HCT116 (cell line): ENCODE measurements at regions of chr14 and their contacts with region 1.

Region 1: DNA sequence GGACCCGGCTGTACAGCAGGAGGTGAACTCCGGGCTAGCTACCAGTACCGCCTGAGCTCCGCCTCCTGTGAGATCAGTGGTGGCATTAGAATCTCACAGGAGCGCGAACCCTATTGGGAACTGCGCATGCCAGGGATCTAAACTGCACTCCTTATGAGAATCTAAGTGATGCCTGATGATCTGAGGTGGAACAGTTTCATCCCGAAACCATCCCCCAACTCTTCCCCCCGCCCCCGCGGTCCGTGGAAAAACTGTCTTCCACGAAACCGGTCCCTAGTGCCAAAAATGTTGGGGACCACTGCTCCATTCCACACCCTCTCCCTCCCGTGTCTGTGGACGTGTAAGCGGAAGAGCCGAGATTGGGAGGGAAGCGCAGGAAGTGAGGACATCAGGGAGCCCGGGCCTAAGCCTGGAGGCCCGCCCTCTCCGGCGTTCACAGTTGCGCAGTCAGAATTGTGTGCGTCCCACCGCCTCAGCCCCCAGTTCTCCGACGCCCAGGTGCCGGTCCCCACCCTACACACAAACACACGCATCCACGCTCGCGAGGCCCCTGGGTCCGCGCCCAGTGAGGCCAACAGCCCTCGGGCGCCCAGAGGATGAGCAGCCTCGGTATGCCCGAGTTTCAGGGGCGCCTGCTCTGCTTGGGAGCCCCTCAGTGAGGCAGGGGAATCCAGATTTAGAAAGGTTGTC is 1.8 kb upstream of the RNASE4 start:
- DNase-seq: peak; percentile 88
- ATAC-seq: peak; percentile 61
- H3K4me3 ChIP-seq: peak overlapping the region; percentile 65 to 72
- H3K27ac ChIP-seq: peak overlapping the region; percentile 97
- H3K4me1 ChIP-seq: peaks cover 27 to 64% of the 10 kb centered on the region in 2 experiments
- H3K27me3 ChIP-seq: no peaks in the 10 kb centered on the region
- CTCF ChIP-seq: 0 out of 6 replicates have a peak, but pooled peaks of 1 of the 3 experiments have one; percentile 7
- POLR2A ChIP-seq: peak; percentile 13
- RAD21 ChIP-seq: no peak

Region 2: GRCh38 chr14:20632682-20633428 is 49.7 kb before region 1 on chr14:
- CTCF ChIA-PET with region 1: interaction called, 4 read pairs
- POLR2A ChIA-PET with region 1: interaction called, 4 read pairs
- RAD21 ChIA-PET with region 1: no interaction called
- intact Hi-C with region 1: loop called (anchors 1 kb)
- DNase-seq: no peak
- ATAC-seq: peak; percentile 76
- H3K4me3 ChIP-seq: peak overlapping the region; percentile 30 to 42
- H3K27ac ChIP-seq: peak overlapping the region; percentile 30; the same call in 1 of the 2 replicates
- H3K4me1 ChIP-seq: peaks cover 0 to 28% of the 10 kb centered on the region in 2 experiments; a peak in 3 of 4 replicates
- H3K27me3 ChIP-seq: no peaks in the 10 kb centered on the region; the same call in 1 of the 2 replicates
- CTCF ChIP-seq: no peak
- POLR2A ChIP-seq: no peak
- RAD21 ChIP-seq: no peak

Region 3: GRCh38 chr14:20723488-20723887 is 40.9 kb after region 1 on chr14:
- CTCF ChIA-PET with region 1: no interaction called
- POLR2A ChIA-PET with region 1: no interaction called
- RAD21 ChIA-PET with region 1: no interaction called
- intact Hi-C with region 1: no loop called
- DNase-seq: no peak
- ATAC-seq: no peak
- H3K4me3 ChIP-seq: no peak overlapping the region
- H3K27ac ChIP-seq: no peak overlapping the region
- H3K4me1 ChIP-seq: no peaks in the 10 kb centered on the region
- H3K27me3 ChIP-seq: peaks cover 23% of the 10 kb centered on the region
- CTCF ChIP-seq: no peak
- POLR2A ChIP-seq: no peak
- RAD21 ChIP-seq: no peak

Region 4: DNA sequence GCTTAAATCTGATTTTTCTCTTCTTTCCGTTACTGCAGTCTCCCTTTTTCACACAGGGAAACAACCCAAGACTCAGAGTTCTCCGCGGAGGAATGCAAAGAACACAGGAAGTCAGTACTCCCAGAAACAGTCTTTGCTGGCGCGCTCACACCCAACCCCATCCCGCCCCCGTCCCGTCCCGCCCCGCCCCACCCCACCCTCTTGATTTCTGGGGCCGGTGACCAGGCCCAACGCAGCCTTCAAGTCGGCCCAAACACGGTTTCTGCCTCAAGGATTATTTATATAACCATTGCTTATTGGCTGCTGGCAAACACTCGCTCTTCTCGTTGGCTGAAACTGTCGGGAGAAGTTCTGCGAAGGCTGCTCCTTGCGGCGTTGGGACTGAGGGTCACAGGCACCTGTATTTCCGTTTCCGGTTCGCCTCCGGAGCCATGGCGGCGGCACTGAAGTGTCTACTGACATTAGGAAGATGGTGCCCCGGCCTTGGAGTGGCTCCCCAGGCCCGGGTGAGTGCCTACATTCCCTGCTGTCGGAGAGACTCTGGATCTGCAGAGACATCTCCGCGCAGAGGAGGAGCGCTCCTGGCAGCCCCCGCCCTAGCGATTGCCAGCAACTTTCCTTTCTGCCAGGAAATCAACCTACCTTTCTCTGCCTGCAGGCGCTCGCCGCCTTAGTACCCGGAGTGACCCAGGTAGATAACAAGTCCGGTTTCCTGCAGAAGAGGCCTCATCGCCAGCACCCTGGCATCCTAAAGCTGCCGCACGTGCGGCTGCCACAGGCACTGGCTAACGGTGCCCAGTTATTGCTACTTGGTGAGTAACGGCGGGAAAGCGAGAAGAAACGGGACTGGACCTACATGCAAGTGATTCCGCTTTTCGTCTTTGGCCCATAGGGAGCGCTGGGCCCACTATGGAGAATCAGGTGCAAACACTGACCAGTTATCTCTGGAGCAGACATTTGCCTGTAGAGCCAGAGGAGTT is 307.3 kb after region 1 on chr14 and contains the start of gene METTL17:
- CTCF ChIA-PET with region 1: no interaction called
- POLR2A ChIA-PET with region 1: no interaction called
- RAD21 ChIA-PET with region 1: no interaction called
- intact Hi-C with region 1: loop called (anchors 5 kb)
- DNase-seq: peak; percentile 93
- ATAC-seq: peak; percentile 90
- H3K4me3 ChIP-seq: peak within 1 kb of the TSS; percentile 69 to 87
- H3K27ac ChIP-seq: peak within 1 kb of the TSS; percentile 85
- H3K4me1 ChIP-seq: peaks cover 15 to 32% of the 10 kb centered on the region in 2 experiments
- H3K27me3 ChIP-seq: no peaks in the 10 kb centered on the region
- CTCF ChIP-seq: peak; percentile 24 to 52 (median 50); a peak in 4 of 6 replicates
- POLR2A ChIP-seq: peak; percentile 44
- RAD21 ChIP-seq: no peak
- total RNA-seq, gene METTL17: 93.5 TPM